ENCODE measurements at regions of chr5 and their contacts with region 1.

Region 1: GRCh38 chr5:69334793-69335268 is 2.2 kb upstream of the CCDC125 start:
- DNase-seq: peak; percentile 61 to 73 (median 70)
- H3K4me3 ChIP-seq: no peak overlapping the region
- H3K4me3 Mint-ChIP-seq: peak overlapping the region; percentile 42 to 66 (median 53)
- H3K27ac ChIP-seq: no peak overlapping the region
- H3K27ac Mint-ChIP-seq: peak overlapping the region; percentile 53 to 91 (median 72)
- H3K4me1 ChIP-seq: peaks cover 19% of the 10 kb centered on the region
- H3K4me1 Mint-ChIP-seq: peaks cover 11 to 33% (median 16%) of the 10 kb centered on the region in 4 donors
- H3K27me3 ChIP-seq: no peaks in the 10 kb centered on the region
- H3K27me3 Mint-ChIP-seq: no peaks in the 10 kb centered on the region

Region 2: DNA sequence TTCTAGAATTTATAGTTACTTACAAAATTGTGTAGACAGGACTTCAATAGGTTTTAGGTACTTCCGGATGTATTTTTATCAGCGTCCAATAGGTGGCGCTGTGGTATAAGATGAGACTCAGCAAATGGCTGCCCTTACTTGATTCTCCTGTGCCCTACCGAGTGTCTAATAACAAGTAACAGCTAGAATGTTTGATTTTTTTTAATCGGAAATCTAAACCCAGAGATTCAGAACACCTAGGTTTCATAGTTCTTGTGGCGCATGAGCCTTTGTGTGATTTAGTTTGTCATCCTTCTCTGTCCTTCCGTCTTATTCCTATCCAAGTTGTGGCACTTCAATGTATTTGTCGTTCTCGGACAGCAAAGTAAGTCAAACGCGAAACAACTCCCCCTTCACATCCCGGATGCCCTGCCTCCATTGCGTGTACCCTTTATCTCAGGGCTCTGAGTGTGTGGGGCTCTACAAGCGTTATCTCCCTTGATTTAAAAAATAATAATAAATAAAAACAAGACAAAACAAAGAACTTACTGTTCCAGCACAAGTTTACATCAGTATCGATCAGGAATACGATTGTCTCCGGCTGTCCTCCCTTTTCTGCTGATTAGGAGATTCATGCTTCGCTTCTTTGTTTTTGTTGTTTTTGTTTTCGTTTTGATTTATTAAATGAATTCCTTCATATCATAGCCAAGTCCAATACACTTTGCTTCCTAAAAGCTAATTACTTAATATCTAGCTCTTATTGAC is 291.7 kb before region 1 on chr5:
- CTCF ChIA-PET with region 1: interaction called, 32 read pairs
- POLR2A ChIA-PET with region 1: interaction called, 6 read pairs
- intact Hi-C with region 1: loop called (anchors 1 kb)
- DNase-seq: peak; percentile 84 to 90 (median 88)
- H3K4me3 ChIP-seq: peak overlapping the region; percentile 37 to 62
- H3K4me3 Mint-ChIP-seq: peak overlapping the region; percentile 81 to 96 (median 87)
- H3K27ac ChIP-seq: peak overlapping the region; percentile 54
- H3K27ac Mint-ChIP-seq: peak overlapping the region; percentile 74 to 96 (median 91)
- H3K4me1 ChIP-seq: peaks cover 5% of the 10 kb centered on the region
- H3K4me1 Mint-ChIP-seq: peaks cover 2 to 12% (median 6%) of the 10 kb centered on the region in 4 donors
- H3K27me3 ChIP-seq: no peaks in the 10 kb centered on the region
- H3K27me3 Mint-ChIP-seq: no peaks in the 10 kb centered on the region

Region 3: GRCh38 chr5:69105996-69106906 is 228.6 kb before region 1 on chr5:
- CTCF ChIA-PET with region 1: no interaction called
- POLR2A ChIA-PET with region 1: no interaction called
- intact Hi-C with region 1: no loop called
- DNase-seq: no peak
- H3K4me3 ChIP-seq: no peak overlapping the region
- H3K4me3 Mint-ChIP-seq: no peak overlapping the region
- H3K27ac ChIP-seq: no peak overlapping the region
- H3K27ac Mint-ChIP-seq: peak overlapping the region in 3 of 7 donors; percentile 11 to 52 (median 37)
- H3K4me1 ChIP-seq: no peaks in the 10 kb centered on the region
- H3K4me1 Mint-ChIP-seq: peaks cover 0 to 5% (median 2%) of the 10 kb centered on the region in 4 donors
- H3K27me3 ChIP-seq: no peaks in the 10 kb centered on the region
- H3K27me3 Mint-ChIP-seq: no peaks in the 10 kb centered on the region

Region 4: GRCh38 chr5:69369369-69370121 is 34.7 kb after region 1 on chr5 and contains the starts of genes AK6, RAD17 and TAF9:
- CTCF ChIA-PET with region 1: interaction called, 10 read pairs
- POLR2A ChIA-PET with region 1: interaction called, 11 read pairs
- intact Hi-C with region 1: loop called (anchors 1 kb)
- DNase-seq: peak; percentile 94 to 98 (median 96)
- H3K4me3 ChIP-seq: peak within 1 kb of the TSS; percentile 67 to 75
- H3K4me3 Mint-ChIP-seq: peak within 1 kb of the TSS; percentile 95 to 99 (median 98)
- H3K27ac ChIP-seq: peak within 1 kb of the TSS; percentile 99
- H3K27ac Mint-ChIP-seq: peak within 1 kb of the TSS; percentile 99 to 100 (median 99)
- H3K4me1 ChIP-seq: peaks cover 29% of the 10 kb centered on the region
- H3K4me1 Mint-ChIP-seq: peaks cover 24 to 67% (median 46%) of the 10 kb centered on the region in 4 donors
- H3K27me3 ChIP-seq: no peaks in the 10 kb centered on the region
- H3K27me3 Mint-ChIP-seq: no peaks in the 10 kb centered on the region
- total RNA-seq, gene AK6: 25.3 to 31.4 TPM
- total RNA-seq, gene RAD17: 30.7 to 31.1 TPM
- total RNA-seq, gene TAF9: 42.3 to 45.9 TPM

Region 5: GRCh38 chr5:69477170-69477569 is 142.3 kb after region 1 on chr5:
- CTCF ChIA-PET with region 1: no interaction called
- POLR2A ChIA-PET with region 1: no interaction called
- intact Hi-C with region 1: no loop called
- DNase-seq: no peak
- H3K4me3 ChIP-seq: no peak overlapping the region
- H3K4me3 Mint-ChIP-seq: no peak overlapping the region
- H3K27ac ChIP-seq: no peak overlapping the region
- H3K27ac Mint-ChIP-seq: no peak overlapping the region
- H3K4me1 ChIP-seq: no peaks in the 10 kb centered on the region
- H3K4me1 Mint-ChIP-seq: peaks cover 0 to 5% (median 0%) of the 10 kb centered on the region in 4 donors
- H3K27me3 ChIP-seq: no peaks in the 10 kb centered on the region
- H3K27me3 Mint-ChIP-seq: peaks cover 0 to 2% of the 10 kb centered on the region in 2 donors

Measured in CD4-positive, alpha-beta memory T cell (primary cell).